ENCODE measurements at regions of chr14 and their contacts with region 1.

Region 1: DNA sequence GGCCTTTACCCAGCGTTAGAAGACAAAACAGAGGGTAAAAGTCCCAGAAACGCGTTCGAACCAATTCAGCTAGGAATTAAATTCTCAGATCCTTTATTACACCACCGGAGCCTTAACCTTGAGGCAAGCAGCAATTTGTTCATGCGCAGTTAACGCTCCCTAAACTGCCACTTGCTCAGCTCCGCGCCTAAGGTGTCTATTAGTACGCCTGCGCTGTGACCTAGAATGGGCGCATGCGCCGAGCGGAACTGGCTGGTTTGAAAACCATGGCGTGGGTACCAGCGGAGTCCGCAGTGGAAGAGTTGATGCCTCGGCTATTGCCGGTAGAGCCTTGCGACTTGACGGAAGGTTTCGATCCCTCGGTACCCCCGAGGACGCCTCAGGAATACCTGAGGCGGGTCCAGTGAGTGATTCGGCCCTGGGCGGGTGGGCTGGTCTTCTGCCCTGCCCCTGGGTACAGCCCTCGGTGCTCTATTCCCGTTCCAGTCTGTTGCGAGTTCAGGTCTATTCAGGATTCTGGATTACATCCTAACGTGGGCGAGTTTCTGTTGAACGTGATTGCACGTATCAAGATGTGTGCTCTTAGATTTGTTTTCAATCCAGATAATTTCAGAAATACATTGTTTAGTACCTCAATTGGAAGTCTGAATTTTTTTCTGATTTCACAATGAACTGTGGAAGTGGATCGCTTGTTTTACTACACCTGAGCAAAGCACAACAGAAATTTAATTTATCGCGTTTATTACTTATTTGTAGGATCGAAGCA is at the start of gene GEMIN2:
- DNase-seq: peak; percentile 94
- H3K4me3 Mint-ChIP-seq: peak within 1 kb of the TSS; percentile 92
- H3K27ac Mint-ChIP-seq: peak within 1 kb of the TSS; percentile 96
- H3K4me1 Mint-ChIP-seq: peaks cover 10% of the 10 kb centered on the region
- H3K27me3 Mint-ChIP-seq: no peaks in the 10 kb centered on the region
- total RNA-seq, gene GEMIN2: 22.2 and 23.7 TPM in 2 replicates

Region 2: GRCh38 chr14:39005044-39005880 is 109.0 kb before region 1 on chr14:
- intact Hi-C with region 1: no loop called
- DNase-seq: no peak
- H3K4me3 Mint-ChIP-seq: no peak overlapping the region
- H3K27ac Mint-ChIP-seq: no peak overlapping the region
- H3K4me1 Mint-ChIP-seq: no peaks in the 10 kb centered on the region
- H3K27me3 Mint-ChIP-seq: peaks cover 5% of the 10 kb centered on the region

Region 3: DNA sequence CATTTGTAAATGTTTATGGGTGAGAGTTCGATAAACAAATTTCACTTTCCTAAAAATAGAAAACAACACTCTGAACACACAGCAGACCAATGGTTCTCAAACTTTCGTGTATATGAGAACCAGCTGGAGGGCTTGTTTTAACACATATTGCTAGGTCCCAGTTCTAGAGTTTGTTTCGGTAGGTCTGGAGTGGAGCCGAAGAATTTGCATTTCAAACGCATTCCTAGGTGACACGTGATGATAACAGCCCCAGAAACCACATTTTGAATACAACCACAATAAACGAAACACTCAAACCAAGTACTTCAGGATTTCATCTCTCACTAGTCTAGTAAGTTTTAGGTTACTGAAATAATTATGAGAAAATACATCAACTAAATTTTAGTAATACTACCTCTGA is 28.3 kb before region 1 on chr14:
- intact Hi-C with region 1: no loop called
- DNase-seq: no peak
- H3K4me3 Mint-ChIP-seq: no peak overlapping the region
- H3K27ac Mint-ChIP-seq: no peak overlapping the region
- H3K4me1 Mint-ChIP-seq: no peaks in the 10 kb centered on the region
- H3K27me3 Mint-ChIP-seq: no peaks in the 10 kb centered on the region

Region 4: DNA sequence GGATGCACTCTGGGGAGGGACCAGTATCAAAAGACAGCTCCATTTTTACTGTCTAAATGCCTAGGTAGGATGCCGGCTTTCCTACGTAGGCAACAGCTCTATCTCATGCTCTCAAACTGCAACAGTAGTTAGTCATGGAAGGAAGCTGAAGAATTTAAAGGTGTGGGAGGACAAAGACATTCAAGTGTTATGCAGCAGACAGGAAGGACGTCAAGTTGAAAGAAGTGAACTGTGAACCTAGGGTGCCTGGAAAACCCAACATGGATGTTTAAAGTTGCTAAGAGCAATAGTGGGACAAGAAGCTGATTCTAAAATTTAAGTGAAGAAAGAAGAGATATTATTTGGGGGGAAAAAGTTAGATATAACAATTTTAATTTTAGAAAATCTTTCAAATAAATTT is 17.1 kb before region 1 on chr14:
- intact Hi-C with region 1: loop called (anchors 2 kb)
- DNase-seq: no peak
- H3K4me3 Mint-ChIP-seq: no peak overlapping the region
- H3K27ac Mint-ChIP-seq: peak overlapping the region; percentile 83
- H3K4me1 Mint-ChIP-seq: peaks cover 50% of the 10 kb centered on the region
- H3K27me3 Mint-ChIP-seq: no peaks in the 10 kb centered on the region

Region 5: DNA sequence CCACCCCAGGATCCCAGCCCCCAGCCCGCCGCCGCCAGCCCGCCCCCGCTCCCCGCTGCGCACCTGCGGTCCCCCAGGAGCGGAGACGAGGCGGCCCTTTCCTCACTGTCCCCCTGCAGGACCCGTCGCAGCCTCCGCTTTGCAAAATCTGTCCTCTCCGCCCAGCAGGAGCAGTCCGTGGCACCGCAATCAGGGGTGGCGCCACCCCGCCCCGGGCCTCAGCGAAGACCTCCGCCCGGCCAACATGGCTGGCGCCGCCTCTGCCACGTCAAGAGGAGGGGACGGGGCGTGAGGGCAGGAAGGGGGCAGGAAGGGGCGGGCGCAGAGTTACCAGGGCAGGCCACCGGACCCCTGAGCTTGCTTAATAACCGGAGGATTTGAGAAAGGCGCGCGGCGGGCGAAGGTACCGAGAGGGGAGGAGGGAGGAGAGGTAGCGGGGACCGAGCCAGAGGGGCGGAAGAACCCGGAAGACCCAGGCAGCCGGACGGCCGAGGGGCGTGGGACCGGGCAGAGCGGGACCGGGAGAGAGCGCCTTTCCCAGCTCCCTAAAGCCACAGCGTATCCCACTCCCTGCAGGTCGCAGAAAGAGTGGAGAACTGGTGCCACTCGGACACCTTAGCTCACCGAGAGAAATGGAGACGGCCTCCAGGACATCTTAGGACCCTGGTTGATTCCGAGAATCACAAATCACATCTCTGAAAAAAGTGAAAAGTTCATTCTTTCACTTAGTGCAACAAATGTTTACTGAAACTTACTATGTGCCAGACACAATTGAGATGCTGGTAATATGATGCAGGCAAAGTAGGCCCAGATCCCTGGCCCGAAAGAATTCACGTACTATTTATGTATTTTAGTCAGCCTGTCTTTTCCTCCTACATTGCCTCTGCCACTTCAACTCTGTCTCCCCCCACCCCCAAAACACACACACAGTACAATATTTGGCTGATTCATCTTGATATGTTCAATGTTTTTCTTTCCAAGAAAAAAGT is 11.0 kb before region 1 on chr14 and contains the start of gene SEC23A:
- intact Hi-C with region 1: loop called (anchors 1 kb)
- DNase-seq: peak; percentile 83
- H3K4me3 Mint-ChIP-seq: peak within 1 kb of the TSS; percentile 98
- H3K27ac Mint-ChIP-seq: peak within 1 kb of the TSS; percentile 96
- H3K4me1 Mint-ChIP-seq: peaks cover 57% of the 10 kb centered on the region
- H3K27me3 Mint-ChIP-seq: no peaks in the 10 kb centered on the region
- total RNA-seq, gene SEC23A: 61.2 and 72.0 TPM in 2 replicates

Region 6: GRCh38 chr14:39174560-39175444 is 60.5 kb after region 1 on chr14 and contains the start of gene PNN:
- intact Hi-C with region 1: loop called (anchors 1 kb)
- DNase-seq: peak; percentile 97
- H3K4me3 Mint-ChIP-seq: peak within 1 kb of the TSS; percentile 94
- H3K27ac Mint-ChIP-seq: peak within 1 kb of the TSS; percentile 95
- H3K4me1 Mint-ChIP-seq: peaks cover 29% of the 10 kb centered on the region
- H3K27me3 Mint-ChIP-seq: no peaks in the 10 kb centered on the region
- total RNA-seq, gene PNN: 111 and 116 TPM in 2 replicates

Region 7: DNA sequence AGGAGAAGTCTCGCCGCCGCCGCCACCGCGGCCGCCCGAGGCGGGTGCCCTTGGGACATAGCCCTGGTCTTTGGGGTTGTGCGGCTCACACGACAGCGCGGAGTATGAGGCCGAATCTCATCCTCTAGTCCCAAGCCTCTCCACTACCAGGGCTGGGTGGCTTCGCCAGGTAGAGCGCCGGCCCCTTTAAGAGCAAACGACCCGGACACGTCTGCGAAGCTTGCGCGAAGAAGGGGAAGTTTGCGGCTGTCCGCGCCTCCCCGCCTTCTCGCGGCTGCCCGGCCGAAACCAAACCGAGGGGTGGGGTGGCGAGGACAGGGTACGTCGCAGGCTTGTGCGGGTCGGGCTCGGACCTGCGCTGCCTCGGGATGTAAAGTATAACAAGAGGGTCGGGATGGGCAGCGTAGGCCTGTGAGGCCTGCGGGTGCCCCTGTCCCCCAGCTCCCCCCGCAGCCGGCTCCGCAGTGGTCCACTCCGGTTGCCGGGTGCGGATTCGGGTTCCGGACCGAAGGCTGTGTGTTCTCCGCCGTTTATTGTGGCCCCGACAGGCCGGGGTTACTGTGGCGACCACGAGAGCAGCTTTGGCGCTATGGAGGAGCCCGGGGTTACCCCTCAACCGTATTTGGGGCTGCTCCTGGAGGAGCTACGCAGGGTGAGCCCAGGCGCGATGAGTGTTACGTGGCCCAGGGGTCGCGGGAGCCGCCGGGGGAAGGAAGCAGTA is 152.8 kb after region 1 on chr14:
- intact Hi-C with region 1: loop called (anchors 2 kb)
- DNase-seq: peak; percentile 76
- H3K4me3 Mint-ChIP-seq: peak overlapping the region; percentile 80
- H3K27ac Mint-ChIP-seq: peak overlapping the region; percentile 79
- H3K4me1 Mint-ChIP-seq: peaks cover 52% of the 10 kb centered on the region
- H3K27me3 Mint-ChIP-seq: no peaks in the 10 kb centered on the region

Region 8: DNA sequence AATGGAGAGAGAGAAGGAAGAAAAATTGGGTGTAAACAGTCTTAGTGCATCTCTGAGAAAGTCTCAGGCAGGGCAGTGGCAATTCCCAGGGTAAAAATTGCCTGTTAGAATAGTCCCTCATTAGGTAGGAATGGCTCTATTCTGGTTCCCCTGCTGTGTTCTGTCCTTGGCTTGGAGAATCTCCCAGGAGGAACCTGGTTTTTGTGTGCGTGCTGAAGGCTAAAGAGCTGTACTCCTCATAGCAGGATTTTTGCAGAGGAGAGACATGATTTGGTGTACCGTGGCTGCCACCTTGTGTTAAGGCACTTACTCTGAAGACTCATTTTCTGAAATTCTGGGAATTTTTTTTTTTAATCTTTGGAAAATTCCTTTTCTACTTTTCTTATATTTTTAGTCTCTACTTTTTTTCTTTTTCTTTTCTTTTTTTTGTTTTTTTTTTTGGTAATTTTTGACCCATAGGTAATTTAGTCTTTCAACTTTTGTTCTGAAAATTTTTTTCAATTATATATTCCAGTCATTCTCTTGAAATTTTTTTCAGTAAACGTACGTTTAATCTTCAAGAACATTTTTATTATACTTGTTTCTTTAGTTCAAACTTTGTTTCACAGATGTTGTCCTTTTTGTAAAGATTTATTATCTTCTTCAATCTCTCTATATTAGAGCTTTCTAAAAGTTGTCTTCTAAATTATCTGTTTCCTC is 254.2 kb after region 1 on chr14:
- intact Hi-C with region 1: loop called (anchors 2 kb)
- DNase-seq: no peak
- H3K4me3 Mint-ChIP-seq: no peak overlapping the region
- H3K27ac Mint-ChIP-seq: no peak overlapping the region
- H3K4me1 Mint-ChIP-seq: no peaks in the 10 kb centered on the region
- H3K27me3 Mint-ChIP-seq: no peaks in the 10 kb centered on the region